Calu3 (cell line): ENCODE measurements at regions of chr13 and their contacts with region 1.

Region 1: DNA sequence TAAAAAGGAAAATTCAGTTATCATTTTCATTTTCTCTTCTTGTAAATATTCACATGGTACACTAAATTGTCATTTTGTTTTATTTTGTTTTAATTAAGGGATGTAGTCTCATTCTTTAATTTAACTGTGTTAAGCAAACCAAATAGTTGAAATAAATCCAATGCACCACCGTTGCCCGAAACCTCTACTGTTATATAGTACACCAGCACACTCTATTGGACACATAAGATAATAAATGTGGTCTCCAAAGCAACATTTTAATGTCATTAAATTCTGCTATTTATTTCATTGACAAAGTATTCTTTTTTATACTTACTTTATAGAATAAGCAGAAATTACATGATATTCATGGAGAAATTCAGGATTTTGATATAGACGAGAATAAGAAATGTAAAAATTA is 156.4 kb upstream of the FREM2 start:
- DNase-seq: no peak
- H3K4me3 Mint-ChIP-seq: no peak overlapping the region
- H3K27ac Mint-ChIP-seq: no peak overlapping the region
- H3K4me1 Mint-ChIP-seq: no peaks in the 10 kb centered on the region
- H3K27me3 Mint-ChIP-seq: no peaks in the 10 kb centered on the region
- CTCF ChIP-seq: no peak

Region 2: DNA sequence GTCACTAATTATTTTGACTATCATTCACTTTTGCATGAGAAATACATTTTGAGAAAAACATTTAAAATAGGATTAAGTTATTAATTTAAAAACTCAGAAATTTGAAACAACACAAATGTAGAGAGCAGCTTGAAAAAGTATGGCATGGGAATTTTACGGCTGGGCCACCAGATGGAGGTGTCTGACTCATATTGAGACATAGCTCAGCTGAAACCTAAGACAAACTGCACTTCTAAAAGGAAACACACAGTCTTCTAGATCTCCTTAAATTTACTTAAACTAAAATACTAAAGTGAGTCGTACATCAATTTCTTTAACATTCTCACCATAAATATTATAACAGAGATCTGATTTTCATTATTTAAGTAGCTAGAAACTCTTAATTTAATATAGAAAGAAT is 890.0 kb before region 1 on chr13:
- CTCF ChIA-PET with region 1: no interaction called
- intact Hi-C with region 1: loop called (anchors 10 kb)
- DNase-seq: peak; percentile 28
- H3K4me3 Mint-ChIP-seq: no peak overlapping the region
- H3K27ac Mint-ChIP-seq: no peak overlapping the region
- H3K4me1 Mint-ChIP-seq: no peaks in the 10 kb centered on the region
- H3K27me3 Mint-ChIP-seq: no peaks in the 10 kb centered on the region
- CTCF ChIP-seq: no peak

Region 3: DNA sequence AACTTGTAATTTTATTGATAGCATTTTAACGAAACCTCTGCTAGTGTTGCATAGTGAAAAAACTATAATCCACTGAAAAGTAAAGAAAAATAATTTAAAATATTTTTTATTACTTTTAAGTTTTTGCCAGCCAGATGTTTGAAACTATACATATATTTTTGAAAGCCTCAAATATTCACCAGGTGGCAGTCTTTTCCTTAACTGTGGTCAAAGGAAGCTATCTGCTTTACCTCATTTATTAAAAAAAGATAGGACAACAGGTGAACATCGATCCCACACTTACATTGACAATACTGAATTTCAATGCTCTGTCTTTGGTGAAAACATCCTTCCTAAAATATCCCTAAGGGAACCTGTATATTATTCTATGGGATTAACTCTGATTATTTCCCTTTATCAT is 761.4 kb before region 1 on chr13:
- CTCF ChIA-PET with region 1: no interaction called
- intact Hi-C with region 1: loop called (anchors 5 kb)
- DNase-seq: no peak
- H3K4me3 Mint-ChIP-seq: no peak overlapping the region
- H3K27ac Mint-ChIP-seq: no peak overlapping the region
- H3K4me1 Mint-ChIP-seq: no peaks in the 10 kb centered on the region
- H3K27me3 Mint-ChIP-seq: no peaks in the 10 kb centered on the region
- CTCF ChIP-seq: no peak